ENCODE measurements at regions of chr11 and their contacts with region 1.

Region 1: GRCh38 chr11:18615628-18616392 is 16.2 kb downstream of the MISFA start:
- DNase-seq: no peak
- H3K4me3 Mint-ChIP-seq: peak overlapping the region; percentile 43
- H3K27ac Mint-ChIP-seq: peak overlapping the region; percentile 66
- H3K4me1 Mint-ChIP-seq: peaks cover 45% of the 10 kb centered on the region
- H3K27me3 Mint-ChIP-seq: no peaks in the 10 kb centered on the region

Region 2: GRCh38 chr11:18578975-18579598 is 36.7 kb before region 1 on chr11:
- intact Hi-C with region 1: loop called (anchors 5 kb)
- DNase-seq: peak; percentile 19
- H3K4me3 Mint-ChIP-seq: peak overlapping the region; percentile 1
- H3K27ac Mint-ChIP-seq: peak overlapping the region; percentile 24
- H3K4me1 Mint-ChIP-seq: peaks cover 20% of the 10 kb centered on the region
- H3K27me3 Mint-ChIP-seq: no peaks in the 10 kb centered on the region

Region 3: GRCh38 chr11:18588297-18589252 is 27.2 kb before region 1 on chr11 and contains the start of gene UEVLD:
- intact Hi-C with region 1: loop called (anchors 1 kb)
- DNase-seq: peak; percentile 62
- H3K4me3 Mint-ChIP-seq: no peak within 1 kb of the TSS
- H3K27ac Mint-ChIP-seq: no peak within 1 kb of the TSS
- H3K4me1 Mint-ChIP-seq: peaks cover 9% of the 10 kb centered on the region
- H3K27me3 Mint-ChIP-seq: no peaks in the 10 kb centered on the region
- total RNA-seq, gene UEVLD: 26.4 and 32.7 TPM in 2 replicates

Region 4: DNA sequence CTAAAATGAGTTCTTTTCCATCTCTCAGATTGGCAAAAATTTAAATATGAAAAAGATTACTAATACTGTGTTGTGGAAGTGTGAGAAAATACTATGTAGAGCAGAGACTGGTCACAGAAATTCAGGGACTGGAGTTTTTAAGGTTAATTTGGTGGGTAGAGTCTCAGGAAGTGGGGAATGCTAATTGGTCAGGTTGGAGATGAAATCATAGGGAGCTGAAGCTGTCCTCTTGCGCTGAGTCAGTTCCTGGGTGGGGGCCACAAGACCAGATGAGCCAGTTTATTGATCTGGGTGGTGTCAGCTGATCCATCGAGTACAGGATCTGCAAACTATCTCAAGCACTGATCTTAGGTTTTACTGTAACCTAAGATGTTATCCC is 53.4 kb after region 1 on chr11:
- intact Hi-C with region 1: loop called (anchors 2 kb)
- DNase-seq: peak; percentile 10
- H3K4me3 Mint-ChIP-seq: no peak overlapping the region
- H3K27ac Mint-ChIP-seq: peak overlapping the region; percentile 81
- H3K4me1 Mint-ChIP-seq: peaks cover 38% of the 10 kb centered on the region
- H3K27me3 Mint-ChIP-seq: peaks cover 12% of the 10 kb centered on the region

Region 5: DNA sequence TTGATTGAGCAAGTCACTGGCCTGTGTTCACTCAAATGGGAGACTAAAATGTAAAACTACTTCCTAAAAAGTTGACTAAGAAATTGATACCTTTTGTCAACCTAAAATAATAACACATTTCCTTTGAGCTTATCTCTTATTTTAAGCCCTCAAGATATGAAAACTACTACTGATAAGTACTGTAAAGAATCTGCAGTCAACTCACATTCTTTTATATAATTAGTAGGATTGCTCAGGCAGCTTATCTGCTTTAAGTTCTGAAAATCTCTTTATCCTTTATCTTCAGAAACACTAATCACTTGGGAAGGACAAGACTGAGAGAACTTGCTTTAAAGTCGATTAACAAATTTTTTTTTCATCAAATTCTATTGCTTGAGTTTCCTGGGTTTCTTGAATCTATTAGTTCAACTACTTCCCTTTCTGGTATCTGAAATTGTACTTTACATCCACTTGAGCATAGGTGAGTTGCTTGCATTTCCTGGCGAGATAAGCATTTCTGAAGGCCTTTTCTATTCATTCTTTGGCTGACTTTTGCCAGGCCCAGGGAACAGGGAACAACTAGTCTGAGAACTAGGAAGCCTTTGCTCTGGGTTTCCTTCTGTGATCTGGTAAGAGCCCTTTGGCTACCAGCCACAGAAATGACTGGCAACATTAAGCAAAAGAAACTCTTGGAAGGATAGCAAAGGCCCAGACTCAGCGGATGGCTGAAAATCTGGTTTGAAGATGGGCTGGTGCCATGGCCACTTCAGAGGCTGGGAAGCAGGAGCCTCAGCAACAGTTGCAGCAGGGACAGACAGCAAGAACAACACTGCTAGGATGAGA is 605.3 kb after region 1 on chr11:
- intact Hi-C with region 1: no loop called
- DNase-seq: no peak
- H3K4me3 Mint-ChIP-seq: no peak overlapping the region
- H3K27ac Mint-ChIP-seq: no peak overlapping the region
- H3K4me1 Mint-ChIP-seq: no peaks in the 10 kb centered on the region
- H3K27me3 Mint-ChIP-seq: peaks cover 6% of the 10 kb centered on the region